ENCODE measurements at regions of chr1 and their contacts with region 1.

Region 1: GRCh38 chr1:228082135-228082891 is at the start of gene ARF1:
- DNase-seq: peak; percentile 97
- ATAC-seq: peak; percentile 90
- H3K4me3 Mint-ChIP-seq: peak within 1 kb of the TSS; percentile 93
- H3K27ac Mint-ChIP-seq: peak within 1 kb of the TSS; percentile 88
- H3K4me1 Mint-ChIP-seq: peaks cover 45% of the 10 kb centered on the region
- H3K27me3 Mint-ChIP-seq: no peaks in the 10 kb centered on the region
- CTCF ChIP-seq: no peak
- total RNA-seq, gene ARF1: 209 and 213 TPM in 2 replicates

Region 2: DNA sequence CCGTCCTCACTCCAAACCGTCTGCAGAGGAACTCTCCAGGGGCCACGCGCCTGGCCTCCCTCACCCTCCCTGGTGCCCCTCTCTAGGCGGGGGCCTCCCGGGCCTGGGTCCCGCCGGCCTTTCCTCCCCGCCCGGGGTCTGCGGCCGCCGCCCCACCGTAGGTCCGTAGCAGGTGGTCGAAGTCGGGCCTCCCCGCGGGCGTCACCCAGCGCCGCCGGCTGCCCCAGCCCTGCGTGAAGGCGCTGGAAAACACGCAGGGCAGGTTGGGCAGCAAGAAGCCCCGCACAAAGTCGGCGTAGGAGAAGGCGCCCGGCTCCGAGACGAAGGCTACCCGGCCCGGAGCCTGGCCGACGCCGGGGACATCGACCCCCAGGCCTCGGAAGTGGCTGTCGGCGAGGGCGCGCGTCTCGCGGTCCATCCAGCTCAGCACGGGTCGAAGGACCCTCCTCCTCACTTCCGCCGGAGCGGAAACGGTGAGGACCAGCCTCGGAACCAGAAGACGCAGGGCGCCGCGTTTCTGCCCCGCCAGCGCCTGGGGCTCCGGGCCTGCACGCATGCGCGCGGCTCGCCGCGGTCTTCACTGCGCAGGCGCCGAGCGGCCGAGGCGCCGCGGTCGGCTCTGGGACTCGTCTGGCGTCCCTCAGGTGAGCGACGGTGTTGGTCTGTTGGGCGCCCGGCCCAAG is 347.3 kb before region 1 on chr1 and contains the starts of genes JMJD4 and SNAP47:
- CTCF ChIA-PET with region 1: no interaction called
- POLR2A ChIA-PET with region 1: no interaction called
- intact Hi-C with region 1: loop called (anchors 1 kb)
- DNase-seq: peak; percentile 97
- ATAC-seq: peak; percentile 91
- H3K4me3 Mint-ChIP-seq: peak within 1 kb of the TSS; percentile 87
- H3K27ac Mint-ChIP-seq: peak within 1 kb of the TSS; percentile 78
- H3K4me1 Mint-ChIP-seq: peaks cover 42% of the 10 kb centered on the region
- H3K27me3 Mint-ChIP-seq: no peaks in the 10 kb centered on the region
- CTCF ChIP-seq: no peak
- total RNA-seq, gene JMJD4: 23.5 and 26.7 TPM in 2 replicates
- total RNA-seq, gene SNAP47: 24.2 and 24.3 TPM in 2 replicates

Region 3: DNA sequence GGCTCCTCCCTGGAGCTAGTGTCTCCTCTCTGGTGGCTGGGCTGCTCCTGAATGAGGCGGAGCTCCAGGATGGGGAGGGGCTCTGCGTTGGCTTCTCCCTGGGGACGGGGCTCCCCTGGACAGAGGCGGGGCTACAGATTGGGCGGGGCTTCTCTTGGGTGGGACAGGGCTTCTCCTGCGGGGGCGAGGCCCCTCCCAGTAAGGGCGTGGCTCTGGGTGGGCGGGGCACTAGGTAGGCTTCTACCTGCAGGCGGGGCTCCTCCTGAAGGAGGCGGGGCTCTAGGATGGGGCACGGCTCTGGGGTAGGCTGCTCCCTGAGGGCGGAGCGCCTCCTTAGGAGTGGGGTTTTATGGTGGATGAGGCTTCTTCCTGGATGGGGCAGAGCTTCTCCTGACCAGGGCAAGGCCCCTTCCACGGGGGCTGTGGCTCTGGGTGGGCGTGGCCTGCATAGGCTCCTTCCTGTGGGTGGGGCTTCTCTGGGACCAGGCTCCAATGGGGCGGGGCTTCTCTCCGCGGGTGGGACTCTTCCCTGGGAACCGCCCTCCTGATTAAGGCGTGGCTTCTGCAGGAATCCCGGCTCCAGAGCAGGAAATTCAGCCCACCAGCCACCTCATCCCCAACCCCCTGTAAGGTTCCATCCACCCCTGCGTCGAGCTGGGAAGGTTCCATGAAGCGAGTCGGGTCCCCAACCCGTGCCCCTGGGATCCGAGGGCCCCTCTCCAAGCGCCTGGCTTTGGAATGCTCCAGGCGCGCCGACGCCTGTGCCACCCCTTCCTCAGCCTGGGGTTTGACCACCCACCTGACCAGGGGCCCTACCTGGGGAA is 22.5 kb before region 1 on chr1:
- CTCF ChIA-PET with region 1: no interaction called
- POLR2A ChIA-PET with region 1: interaction called, 3 read pairs
- intact Hi-C with region 1: loop called (anchors 2 kb)
- DNase-seq: peak; percentile 33
- ATAC-seq: peak; percentile 70
- H3K4me3 Mint-ChIP-seq: peak overlapping the region; percentile 56
- H3K27ac Mint-ChIP-seq: no peak overlapping the region
- H3K4me1 Mint-ChIP-seq: peaks cover 15% of the 10 kb centered on the region
- H3K27me3 Mint-ChIP-seq: peaks cover 29% of the 10 kb centered on the region
- CTCF ChIP-seq: no peak

Region 4: GRCh38 chr1:228109073-228109961 is 27.0 kb after region 1 on chr1 and contains the start of gene MRPL55:
- CTCF ChIA-PET with region 1: no interaction called
- POLR2A ChIA-PET with region 1: interaction called, 20 read pairs
- intact Hi-C with region 1: loop called (anchors 1 kb)
- DNase-seq: peak; percentile 100
- ATAC-seq: peak; percentile 96
- H3K4me3 Mint-ChIP-seq: peak within 1 kb of the TSS; percentile 92
- H3K27ac Mint-ChIP-seq: peak within 1 kb of the TSS; percentile 93
- H3K4me1 Mint-ChIP-seq: peaks cover 24% of the 10 kb centered on the region
- H3K27me3 Mint-ChIP-seq: no peaks in the 10 kb centered on the region
- CTCF ChIP-seq: no peak
- total RNA-seq, gene MRPL55: 34.0 and 34.3 TPM in 2 replicates

Region 5: GRCh38 chr1:228194436-228194835 is 112.1 kb after region 1 on chr1:
- CTCF ChIA-PET with region 1: no interaction called
- POLR2A ChIA-PET with region 1: no interaction called
- intact Hi-C with region 1: no loop called
- DNase-seq: no peak
- ATAC-seq: no peak
- H3K4me3 Mint-ChIP-seq: no peak overlapping the region
- H3K27ac Mint-ChIP-seq: no peak overlapping the region
- H3K4me1 Mint-ChIP-seq: no peaks in the 10 kb centered on the region
- H3K27me3 Mint-ChIP-seq: no peaks in the 10 kb centered on the region
- CTCF ChIP-seq: no peak

Region 6: GRCh38 chr1:228344631-228345072 is 262.3 kb after region 1 on chr1:
- CTCF ChIA-PET with region 1: no interaction called
- POLR2A ChIA-PET with region 1: no interaction called
- intact Hi-C with region 1: no loop called
- DNase-seq: no peak
- ATAC-seq: no peak
- H3K4me3 Mint-ChIP-seq: no peak overlapping the region
- H3K27ac Mint-ChIP-seq: no peak overlapping the region
- H3K4me1 Mint-ChIP-seq: no peaks in the 10 kb centered on the region
- H3K27me3 Mint-ChIP-seq: no peaks in the 10 kb centered on the region
- CTCF ChIP-seq: no peak

Region 7: GRCh38 chr1:228434686-228435085 is 352.4 kb after region 1 on chr1:
- CTCF ChIA-PET with region 1: no interaction called
- POLR2A ChIA-PET with region 1: no interaction called
- intact Hi-C with region 1: no loop called
- DNase-seq: no peak
- ATAC-seq: no peak
- H3K4me3 Mint-ChIP-seq: no peak overlapping the region
- H3K27ac Mint-ChIP-seq: no peak overlapping the region
- H3K4me1 Mint-ChIP-seq: no peaks in the 10 kb centered on the region
- H3K27me3 Mint-ChIP-seq: peaks cover 56% of the 10 kb centered on the region
- CTCF ChIP-seq: no peak

Region 8: GRCh38 chr1:228486596-228487335 is 404.5 kb after region 1 on chr1:
- CTCF ChIA-PET with region 1: no interaction called
- POLR2A ChIA-PET with region 1: interaction called, 6 read pairs
- intact Hi-C with region 1: loop called (anchors 1 kb)
- DNase-seq: peak; percentile 65
- ATAC-seq: peak; percentile 64
- H3K4me3 Mint-ChIP-seq: peak overlapping the region; percentile 94
- H3K27ac Mint-ChIP-seq: peak overlapping the region; percentile 100
- H3K4me1 Mint-ChIP-seq: peaks cover 38% of the 10 kb centered on the region
- H3K27me3 Mint-ChIP-seq: no peaks in the 10 kb centered on the region
- CTCF ChIP-seq: no peak

Region 9: DNA sequence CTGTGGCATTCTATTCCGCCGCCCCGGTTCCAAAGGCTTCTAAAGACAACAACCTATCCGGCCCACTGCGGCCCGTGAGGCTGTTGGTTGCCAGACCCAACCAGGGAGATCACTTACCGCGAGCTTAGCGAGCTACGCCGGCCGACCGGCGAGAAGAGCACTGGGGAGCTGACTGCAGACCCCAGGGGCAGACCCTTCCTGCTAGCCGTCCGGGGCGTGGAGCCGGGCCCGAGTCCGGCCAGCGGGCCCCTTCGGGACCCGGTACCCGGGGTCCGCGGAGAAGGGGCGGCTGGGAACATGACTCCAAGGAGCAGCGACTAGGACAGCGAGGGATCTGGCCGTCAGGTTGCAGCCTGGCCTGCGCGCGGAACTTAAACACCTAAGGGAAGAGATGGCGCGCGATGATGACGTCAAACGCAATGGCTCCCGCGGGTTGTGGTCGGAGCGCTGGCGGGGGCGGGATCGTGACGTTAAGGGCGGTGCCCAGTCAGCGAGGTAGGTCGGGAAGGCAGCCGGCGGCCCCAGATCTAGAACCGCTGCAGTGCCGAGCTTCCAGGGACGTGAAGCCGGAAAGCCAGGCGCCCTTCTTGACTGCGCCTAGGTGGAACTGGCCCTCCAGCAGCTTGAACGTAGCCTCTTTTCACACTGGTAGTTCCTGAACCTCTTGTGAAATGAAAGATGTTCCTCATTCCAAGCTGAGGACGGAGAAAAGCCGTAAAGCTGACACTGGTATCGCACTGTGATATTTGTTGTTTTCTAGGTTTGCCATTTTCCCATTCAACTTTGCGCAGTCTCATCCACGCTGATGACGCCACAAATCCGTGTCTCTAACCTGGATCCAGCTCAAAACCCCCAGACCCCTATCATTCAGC is 1425.9 kb after region 1 on chr1 and contains the start of gene NUP133:
- CTCF ChIA-PET with region 1: no interaction called
- POLR2A ChIA-PET with region 1: no interaction called
- intact Hi-C with region 1: loop called (anchors 10 kb)
- DNase-seq: peak; percentile 97
- ATAC-seq: peak; percentile 92
- H3K4me3 Mint-ChIP-seq: peak within 1 kb of the TSS; percentile 90
- H3K27ac Mint-ChIP-seq: peak within 1 kb of the TSS; percentile 97
- H3K4me1 Mint-ChIP-seq: peaks cover 26% of the 10 kb centered on the region
- H3K27me3 Mint-ChIP-seq: peaks cover 1% of the 10 kb centered on the region
- CTCF ChIP-seq: no peak
- total RNA-seq, gene NUP133: 49.6 and 56.2 TPM in 2 replicates